ENCODE measurements at regions of chr14 and their contacts with region 1.

Region 1: GRCh38 chr14:44912041-44912869 is 49.5 kb downstream of the KLHL28 start:
- DNase-seq: no peak
- ATAC-seq: peak in 3 of 4 donors; percentile 46 to 47 (median 47)
- H3K4me3 ChIP-seq: peak overlapping the region in 2 of 3 donors; percentile 30 to 52
- H3K27ac ChIP-seq: no peak overlapping the region
- H3K4me1 ChIP-seq: no peaks in the 10 kb centered on the region
- H3K27me3 ChIP-seq: peaks cover 0 to 8% of the 10 kb centered on the region in 2 donors
- CTCF ChIP-seq: no peak
- POLR2A ChIP-seq: no peak

Region 2: GRCh38 chr14:45253068-45253753 is 341.0 kb after region 1 on chr14 and contains the start of gene MIS18BP1:
- intact Hi-C with region 1: loop called in 1 of 2 experiments (anchors 10 kb)
- DNase-seq: peak; percentile 98
- ATAC-seq: peak; percentile 91 to 95 (median 94)
- H3K4me3 ChIP-seq: peak within 1 kb of the TSS; percentile 70 to 89 (median 76)
- H3K27ac ChIP-seq: peak within 1 kb of the TSS; percentile 90 to 97 (median 91)
- H3K4me1 ChIP-seq: peaks cover 0 to 13% (median 0%) of the 10 kb centered on the region in 4 donors
- H3K27me3 ChIP-seq: no peaks in the 10 kb centered on the region
- CTCF ChIP-seq: peak; percentile 53 to 82 (median 76)
- POLR2A ChIP-seq: peak; percentile 64
- total RNA-seq, gene MIS18BP1: 4.6 to 11.0 (median 6.4) TPM

Region 3: DNA sequence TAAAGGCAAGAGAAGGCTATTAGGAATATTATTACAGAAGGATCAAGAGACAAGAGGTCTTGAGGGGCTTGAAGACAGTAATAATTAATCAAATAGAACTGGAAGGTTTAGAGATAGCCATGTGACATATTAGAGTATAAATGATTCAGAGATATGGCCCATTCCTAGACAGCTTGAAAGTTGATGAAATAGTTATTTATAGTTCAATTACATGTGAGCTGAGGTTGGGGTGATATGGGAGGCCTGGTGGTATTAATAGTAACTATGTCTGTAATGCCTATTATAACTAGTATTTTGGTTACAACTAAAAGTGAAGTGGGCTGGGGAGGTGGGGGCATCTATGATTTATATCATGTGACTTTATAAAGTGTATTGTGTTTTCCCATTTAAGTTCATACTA is 354.8 kb after region 1 on chr14:
- intact Hi-C with region 1: loop called in 1 of 2 experiments (anchors 5 kb)
- DNase-seq: no peak
- ATAC-seq: no peak
- H3K4me3 ChIP-seq: no peak overlapping the region
- H3K27ac ChIP-seq: no peak overlapping the region
- H3K4me1 ChIP-seq: no peaks in the 10 kb centered on the region
- H3K27me3 ChIP-seq: no peaks in the 10 kb centered on the region
- CTCF ChIP-seq: no peak
- POLR2A ChIP-seq: no peak